Head of caudate nucleus (tissue), 42 donors: ENCODE measurements at regions of chr7 and their contacts with region 1.

Region 1: DNA sequence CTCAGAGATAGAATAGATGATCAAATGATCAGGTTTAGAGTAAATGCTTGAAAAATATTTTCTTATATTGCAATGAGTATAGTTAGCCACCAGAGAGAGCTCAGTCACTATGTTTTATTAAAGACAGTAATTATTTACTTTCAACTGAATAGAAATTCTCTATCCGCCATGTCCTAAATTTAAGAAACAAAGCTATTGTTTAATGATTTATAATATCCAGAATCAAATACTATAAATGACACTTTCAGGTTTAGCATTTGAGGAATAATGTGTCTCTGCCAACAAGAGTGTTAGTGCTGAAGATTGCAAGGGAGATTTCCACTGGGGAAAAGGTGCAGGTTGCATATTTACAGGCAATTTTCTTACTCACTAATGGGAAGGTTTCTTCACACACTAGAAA is 184.7 kb downstream of the DGKB start:
- DNase-seq: no peak

Region 2: GRCh38 chr7:15015545-15016326 is 297.9 kb after region 1 on chr7:
- intact Hi-C with region 1: loop called (anchors 10 kb)
- DNase-seq: peak in 41 of 42 donors; percentile 23 to 91 (median 65)